Activated B cell treated with CpG ODN at 0.5 μM for 24 hours (primary cell): ENCODE measurements at regions of chr16 and their contacts with region 1.

Region 1: GRCh38 chr16:10876799-10877341 is at the start of gene CIITA:
- DNase-seq: peak; percentile 62
- ATAC-seq: peak; percentile 71
- H3K4me3 Mint-ChIP-seq: peak within 1 kb of the TSS; percentile 100
- H3K27ac Mint-ChIP-seq: peak within 1 kb of the TSS; percentile 90
- H3K4me1 Mint-ChIP-seq: peaks cover 70% of the 10 kb centered on the region
- H3K27me3 Mint-ChIP-seq: no peaks in the 10 kb centered on the region
- CTCF ChIP-seq: no peak
- total RNA-seq, gene CIITA: 332 and 401 TPM in 2 replicates

Region 2: DNA sequence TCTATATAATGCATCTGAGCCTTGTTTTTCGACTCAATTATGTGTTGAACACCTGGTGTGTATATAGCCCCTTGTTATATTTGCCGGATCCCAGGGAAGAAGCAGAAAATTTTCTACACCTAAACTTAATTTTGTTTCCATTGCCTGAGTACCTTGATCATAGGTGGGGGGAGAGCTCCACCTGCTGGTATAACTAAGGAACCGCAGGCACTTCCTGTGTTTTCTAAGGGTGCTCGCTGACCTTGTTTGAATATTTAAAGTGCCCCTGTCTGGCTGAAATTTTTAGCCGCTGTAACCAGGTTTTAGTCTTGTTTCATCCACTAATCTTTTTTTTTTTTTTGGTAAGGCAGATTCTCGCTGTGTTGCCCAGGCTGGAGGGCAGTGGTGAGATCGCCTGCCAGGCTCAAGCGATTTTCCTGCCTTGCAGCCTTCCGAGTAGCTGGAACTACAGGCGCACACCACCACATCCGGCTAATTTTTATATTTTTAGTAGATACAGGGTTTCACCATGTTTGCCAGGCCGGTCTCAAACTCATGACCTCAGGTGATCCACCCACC is 139.7 kb before region 1 on chr16:
- CTCF ChIA-PET with region 1: interaction called, 19 read pairs
- POLR2A ChIA-PET with region 1: interaction called, 88 read pairs
- intact Hi-C with region 1: loop called (anchors 1 kb)
- DNase-seq: no peak
- ATAC-seq: peak; percentile 65
- H3K4me3 Mint-ChIP-seq: peak overlapping the region; percentile 68
- H3K27ac Mint-ChIP-seq: peak overlapping the region; percentile 90
- H3K4me1 Mint-ChIP-seq: peaks cover 51% of the 10 kb centered on the region
- H3K27me3 Mint-ChIP-seq: no peaks in the 10 kb centered on the region
- CTCF ChIP-seq: peak; percentile 60

Region 3: GRCh38 chr16:10776280-10776679 is 100.6 kb before region 1 on chr16:
- CTCF ChIA-PET with region 1: no interaction called
- POLR2A ChIA-PET with region 1: interaction called, 27 read pairs
- intact Hi-C with region 1: no loop called
- DNase-seq: no peak
- ATAC-seq: peak; percentile 26
- H3K4me3 Mint-ChIP-seq: no peak overlapping the region
- H3K27ac Mint-ChIP-seq: peak overlapping the region; percentile 9
- H3K4me1 Mint-ChIP-seq: peaks cover 41% of the 10 kb centered on the region
- H3K27me3 Mint-ChIP-seq: no peaks in the 10 kb centered on the region
- CTCF ChIP-seq: no peak

Region 4: DNA sequence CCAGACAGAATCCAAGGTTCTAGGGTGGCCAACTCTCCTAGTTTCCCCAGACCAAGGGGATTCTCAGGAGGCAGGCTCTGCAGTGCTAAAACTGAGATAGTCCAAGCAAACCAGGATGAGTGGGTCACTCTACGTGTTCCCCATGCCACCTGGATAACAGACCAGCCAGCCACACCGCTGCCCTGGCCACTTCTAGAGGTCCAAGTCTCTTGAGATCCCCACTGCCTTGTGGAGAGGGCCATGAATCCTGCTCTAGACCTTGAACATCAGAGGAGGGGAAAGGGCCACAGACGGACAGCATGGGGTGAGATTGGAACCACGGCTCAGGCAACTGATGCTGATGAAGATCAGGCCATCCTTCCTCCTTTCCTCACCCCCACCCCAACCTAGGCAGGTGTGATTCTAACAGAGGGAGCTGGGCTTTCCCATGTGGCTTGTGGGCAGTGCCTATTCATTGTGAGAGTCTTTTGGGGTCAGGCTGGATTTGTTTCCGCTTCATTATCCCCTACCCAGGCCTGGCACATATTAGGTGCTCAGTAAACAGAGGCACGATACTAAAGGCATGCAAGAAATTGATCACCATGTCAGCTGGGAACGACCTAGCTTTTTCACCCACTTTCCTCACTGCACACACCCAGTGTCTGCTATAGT is 41.5 kb before region 1 on chr16:
- CTCF ChIA-PET with region 1: no interaction called
- POLR2A ChIA-PET with region 1: interaction called, 18 read pairs
- intact Hi-C with region 1: no loop called
- DNase-seq: no peak
- ATAC-seq: peak; percentile 43
- H3K4me3 Mint-ChIP-seq: no peak overlapping the region
- H3K27ac Mint-ChIP-seq: peak overlapping the region; percentile 31
- H3K4me1 Mint-ChIP-seq: peaks cover 62% of the 10 kb centered on the region
- H3K27me3 Mint-ChIP-seq: no peaks in the 10 kb centered on the region
- CTCF ChIP-seq: no peak

Region 5: GRCh38 chr16:10918294-10919002 is 41.6 kb after region 1 on chr16:
- CTCF ChIA-PET with region 1: interaction called, 43 read pairs
- POLR2A ChIA-PET with region 1: interaction called, 234 read pairs
- intact Hi-C with region 1: loop called (anchors 1 kb)
- DNase-seq: peak; percentile 80
- ATAC-seq: peak; percentile 78
- H3K4me3 Mint-ChIP-seq: peak overlapping the region; percentile 46
- H3K27ac Mint-ChIP-seq: peak overlapping the region; percentile 88
- H3K4me1 Mint-ChIP-seq: peaks cover 72% of the 10 kb centered on the region
- H3K27me3 Mint-ChIP-seq: no peaks in the 10 kb centered on the region
- CTCF ChIP-seq: no peak

Region 6: DNA sequence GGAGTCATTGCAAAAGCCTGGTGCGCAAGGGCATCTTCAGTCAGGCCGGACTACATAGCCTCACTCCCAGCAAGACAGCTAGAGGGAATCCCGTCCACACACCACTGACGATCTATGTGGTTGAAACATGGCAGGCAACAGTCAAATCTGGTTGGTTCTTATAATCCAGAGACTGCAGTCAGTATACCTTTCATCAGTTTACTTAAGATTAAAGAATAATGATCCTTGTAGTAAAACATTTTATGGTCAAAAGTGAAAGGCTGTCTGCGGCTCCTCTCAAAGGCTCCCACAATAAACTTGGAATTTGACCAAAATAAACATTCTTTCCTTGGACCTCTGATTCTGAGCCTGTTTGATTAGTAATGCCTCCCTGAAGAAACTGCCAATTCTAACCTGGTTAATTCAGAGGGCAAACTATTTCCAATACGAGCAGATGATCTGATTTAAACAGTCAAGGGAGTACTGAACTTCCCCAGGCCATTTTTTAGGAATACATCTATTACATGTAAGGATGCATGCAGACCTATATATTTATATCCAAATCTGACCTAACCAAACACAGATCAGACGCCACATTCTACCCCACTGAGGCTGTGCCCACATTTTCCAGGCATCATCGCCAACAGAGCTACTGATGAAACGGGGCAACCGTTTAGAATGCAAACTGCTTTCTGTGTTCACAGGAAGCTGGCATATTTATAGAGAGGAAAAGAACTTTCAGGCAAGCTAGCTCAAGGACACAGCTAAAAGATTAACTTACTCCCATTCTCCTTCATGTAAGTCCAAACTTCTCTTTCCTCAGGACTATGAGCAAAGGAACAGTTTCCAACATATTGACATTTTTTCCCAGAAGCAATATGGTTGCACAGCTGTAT is 881.0 kb after region 1 on chr16:
- CTCF ChIA-PET with region 1: no interaction called
- POLR2A ChIA-PET with region 1: interaction called, 10 read pairs
- intact Hi-C with region 1: no loop called
- DNase-seq: no peak
- ATAC-seq: no peak
- H3K4me3 Mint-ChIP-seq: no peak overlapping the region
- H3K27ac Mint-ChIP-seq: no peak overlapping the region
- H3K4me1 Mint-ChIP-seq: peaks cover 31% of the 10 kb centered on the region
- H3K27me3 Mint-ChIP-seq: no peaks in the 10 kb centered on the region
- CTCF ChIP-seq: no peak